ENCODE measurements at regions of chr6 and their contacts with region 1.

Region 1: GRCh38 chr6:43952746-43953145 is 174.5 kb downstream of the MRPL14 start:
- DNase-seq: peak; percentile 21
- H3K4me3 Mint-ChIP-seq: no peak overlapping the region
- H3K27ac Mint-ChIP-seq: no peak overlapping the region
- H3K4me1 Mint-ChIP-seq: no peaks in the 10 kb centered on the region
- H3K27me3 Mint-ChIP-seq: peaks cover 9% of the 10 kb centered on the region

Region 2: DNA sequence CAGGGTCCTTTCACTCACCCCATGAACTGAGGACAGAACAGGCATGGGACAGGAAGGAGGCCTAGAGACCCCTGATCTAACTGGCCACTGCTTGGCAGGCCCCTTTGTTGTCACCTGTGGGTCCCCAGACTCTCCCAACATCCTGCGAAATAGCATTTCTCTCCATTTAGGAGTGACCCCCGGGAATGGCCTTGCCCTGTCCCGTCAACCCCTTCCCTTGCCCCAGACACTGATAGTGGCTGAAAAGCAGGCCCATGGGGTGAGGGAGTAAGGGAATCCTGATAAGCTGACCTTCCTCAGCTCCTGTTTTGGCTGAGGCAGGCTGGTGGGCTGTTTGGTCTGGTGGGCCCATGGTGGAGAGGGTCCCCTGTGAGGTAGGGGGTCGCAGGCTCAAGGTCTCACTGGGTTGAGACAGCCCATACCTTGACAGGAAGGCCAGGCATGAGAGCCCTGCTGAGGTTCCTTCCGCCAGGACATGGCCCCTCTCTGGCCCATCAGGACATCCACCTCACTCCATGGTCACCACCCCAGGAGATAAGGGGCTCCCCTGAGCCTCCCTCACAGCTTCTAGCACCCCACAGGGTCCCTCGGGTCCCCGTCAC is 35.2 kb after region 1 on chr6:
- CTCF ChIA-PET with region 1: no interaction called
- POLR2A ChIA-PET with region 1: no interaction called
- intact Hi-C with region 1: loop called (anchors 1 kb)
- DNase-seq: no peak
- H3K4me3 Mint-ChIP-seq: no peak overlapping the region
- H3K27ac Mint-ChIP-seq: no peak overlapping the region
- H3K4me1 Mint-ChIP-seq: no peaks in the 10 kb centered on the region
- H3K27me3 Mint-ChIP-seq: peaks cover 3% of the 10 kb centered on the region